Activated B cell treated with CpG ODN at 0.5 μM for 24 hours (primary cell): ENCODE measurements at regions of chr19 and their contacts with region 1.

Region 1: GRCh38 chr19:13905938-13906904 is at the starts of genes BRME1 and CC2D1A:
- DNase-seq: peak; percentile 93
- ATAC-seq: peak; percentile 99
- H3K4me3 Mint-ChIP-seq: peak within 1 kb of the TSS; percentile 87
- H3K27ac Mint-ChIP-seq: peak within 1 kb of the TSS; percentile 78
- H3K4me1 Mint-ChIP-seq: peaks cover 11% of the 10 kb centered on the region
- H3K27me3 Mint-ChIP-seq: no peaks in the 10 kb centered on the region
- CTCF ChIP-seq: no peak
- total RNA-seq, gene BRME1: 1.2 and 2.0 TPM in 2 replicates
- total RNA-seq, gene CC2D1A: 32.4 and 35.6 TPM in 2 replicates

Region 2: GRCh38 chr19:13790354-13790753 is 115.9 kb before region 1 on chr19:
- CTCF ChIA-PET with region 1: no interaction called
- POLR2A ChIA-PET with region 1: no interaction called
- intact Hi-C with region 1: no loop called
- DNase-seq: no peak
- ATAC-seq: no peak
- H3K4me3 Mint-ChIP-seq: no peak overlapping the region
- H3K27ac Mint-ChIP-seq: peak overlapping the region; percentile 68
- H3K4me1 Mint-ChIP-seq: peaks cover 42% of the 10 kb centered on the region
- H3K27me3 Mint-ChIP-seq: no peaks in the 10 kb centered on the region
- CTCF ChIP-seq: no peak

Region 3: GRCh38 chr19:13920940-13921761 is 14.9 kb after region 1 on chr19:
- CTCF ChIA-PET with region 1: no interaction called
- POLR2A ChIA-PET with region 1: interaction called, 4 read pairs
- intact Hi-C with region 1: loop called (anchors 1 kb)
- DNase-seq: no peak
- ATAC-seq: peak; percentile 82
- H3K4me3 Mint-ChIP-seq: no peak overlapping the region
- H3K27ac Mint-ChIP-seq: no peak overlapping the region
- H3K4me1 Mint-ChIP-seq: no peaks in the 10 kb centered on the region
- H3K27me3 Mint-ChIP-seq: no peaks in the 10 kb centered on the region
- CTCF ChIP-seq: no peak

Region 4: DNA sequence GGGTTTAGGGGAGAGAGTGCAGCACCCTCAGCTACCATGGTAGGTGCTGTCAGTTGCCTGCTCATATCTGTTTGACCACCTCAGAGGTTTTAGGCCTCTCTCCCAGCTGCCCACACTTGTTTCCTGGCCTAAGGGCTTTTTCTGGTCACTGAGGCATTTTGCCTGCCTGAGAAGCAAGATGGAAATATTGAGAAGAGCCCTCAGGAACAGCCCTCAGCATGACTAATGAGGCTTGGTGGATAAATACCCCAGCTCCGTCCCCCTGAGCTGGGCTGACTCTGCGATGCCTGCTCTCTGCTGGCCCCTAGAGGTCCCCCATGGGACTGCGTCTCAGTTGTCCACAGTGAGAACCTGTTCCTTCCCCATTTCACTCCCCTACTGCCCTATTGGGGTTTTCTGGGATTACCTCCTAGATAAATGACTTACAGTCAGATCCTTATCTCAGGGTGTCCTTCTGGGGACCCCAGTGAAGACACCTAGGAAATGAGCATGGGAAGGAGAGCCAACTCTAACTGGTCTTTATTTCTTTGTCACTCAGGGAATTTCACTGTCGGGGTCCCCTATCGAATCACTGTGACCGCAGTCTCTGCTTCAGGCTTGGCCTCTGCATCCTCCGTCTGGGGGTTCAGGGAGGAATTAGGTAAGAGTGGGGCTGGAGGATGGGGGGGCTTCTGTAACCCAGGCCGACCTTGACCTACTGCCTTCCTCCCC is 142.4 kb after region 1 on chr19:
- CTCF ChIA-PET with region 1: interaction called, 4 read pairs
- POLR2A ChIA-PET with region 1: interaction called, 9 read pairs
- intact Hi-C with region 1: loop called (anchors 1 kb)
- DNase-seq: peak; percentile 71
- ATAC-seq: peak; percentile 99
- H3K4me3 Mint-ChIP-seq: no peak overlapping the region
- H3K27ac Mint-ChIP-seq: no peak overlapping the region
- H3K4me1 Mint-ChIP-seq: no peaks in the 10 kb centered on the region
- H3K27me3 Mint-ChIP-seq: no peaks in the 10 kb centered on the region
- CTCF ChIP-seq: no peak

Region 5: DNA sequence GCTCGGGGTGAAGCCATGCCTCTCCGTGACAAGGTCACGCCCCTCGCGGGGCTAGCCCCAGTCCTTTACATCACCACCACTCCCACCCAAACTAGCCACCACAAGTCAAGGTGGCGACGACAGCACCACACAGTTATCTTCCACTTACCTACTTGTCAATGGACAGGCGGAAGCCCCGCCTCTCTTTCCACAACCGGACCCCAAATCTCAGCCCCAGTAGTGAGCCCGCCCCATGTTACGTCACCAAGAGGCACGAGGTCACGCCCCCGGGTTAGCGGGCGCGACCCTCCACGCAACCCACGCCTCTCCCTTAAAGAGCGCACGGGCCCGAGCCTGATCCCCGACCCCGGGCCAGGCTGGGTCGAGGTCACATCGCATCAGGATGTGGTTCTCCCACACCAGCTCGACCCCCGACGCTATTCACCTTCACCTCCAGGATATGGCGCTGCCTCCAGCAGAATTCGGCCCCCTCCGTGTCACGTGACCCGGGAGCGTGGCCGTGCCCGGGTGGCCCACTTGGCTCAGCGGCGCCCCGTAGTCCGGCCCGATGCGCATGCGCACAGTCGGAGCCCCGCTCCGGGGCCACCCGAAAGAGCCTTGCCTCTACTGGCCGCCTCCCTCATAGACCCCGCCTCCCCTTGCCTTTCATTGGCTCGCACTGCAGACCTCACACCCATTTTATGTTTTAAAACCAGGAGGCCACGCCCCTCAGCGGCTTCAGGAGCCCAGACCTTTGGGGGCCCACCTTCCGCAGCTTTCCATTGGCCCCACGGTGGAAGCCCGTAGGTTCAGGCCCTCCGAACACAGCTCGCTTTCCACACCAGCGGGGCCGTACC is 1219.2 kb after region 1 on chr19:
- CTCF ChIA-PET with region 1: no interaction called
- POLR2A ChIA-PET with region 1: interaction called, 10 read pairs
- intact Hi-C with region 1: no loop called
- DNase-seq: peak; percentile 96
- ATAC-seq: peak; percentile 88
- H3K4me3 Mint-ChIP-seq: peak overlapping the region; percentile 95
- H3K27ac Mint-ChIP-seq: peak overlapping the region; percentile 91
- H3K4me1 Mint-ChIP-seq: peaks cover 17% of the 10 kb centered on the region
- H3K27me3 Mint-ChIP-seq: peaks cover 4% of the 10 kb centered on the region
- CTCF ChIP-seq: no peak